ENCODE measurements at regions of chr22 and their contacts with region 1.

Region 1: DNA sequence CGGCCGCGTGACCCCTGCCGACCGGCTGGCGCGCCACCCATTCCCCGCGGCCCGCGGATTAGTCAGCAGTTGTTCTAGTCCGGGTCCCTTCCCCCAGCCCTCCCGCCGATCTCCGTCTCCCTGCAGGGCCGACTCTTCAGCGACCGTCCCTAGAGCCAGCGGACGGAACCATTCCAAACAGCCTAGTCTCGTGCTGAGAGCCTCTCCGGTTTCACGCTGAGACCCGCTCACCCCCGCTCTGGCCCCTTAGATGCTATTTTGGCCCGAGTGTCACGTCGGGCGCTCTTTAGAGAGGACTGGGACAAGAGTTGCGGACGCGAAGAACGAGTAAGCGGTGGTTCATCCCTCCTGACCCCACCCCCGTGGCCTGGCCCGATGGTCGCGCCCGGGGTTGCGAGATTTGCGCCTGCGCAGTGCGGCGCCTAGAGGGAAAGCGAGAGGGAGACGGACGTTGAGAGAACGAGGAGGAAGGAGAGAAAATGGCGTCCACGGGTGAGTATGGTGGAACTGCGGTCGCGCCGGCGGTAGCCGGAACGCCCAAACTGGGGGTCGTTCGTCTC is at the starts of genes EWSR1 and RHBDD3:
- DNase-seq: peak; percentile 99
- ATAC-seq: peak; percentile 86
- H3K4me3 Mint-ChIP-seq: peak within 1 kb of the TSS; percentile 96
- H3K27ac Mint-ChIP-seq: peak within 1 kb of the TSS; percentile 100
- H3K4me1 Mint-ChIP-seq: peaks cover 58% of the 10 kb centered on the region
- H3K27me3 Mint-ChIP-seq: no peaks in the 10 kb centered on the region
- CTCF ChIP-seq: no peak
- total RNA-seq, gene EWSR1: 347 and 382 TPM in 2 replicates
- total RNA-seq, gene RHBDD3: 17.7 and 17.9 TPM in 2 replicates

Region 2: DNA sequence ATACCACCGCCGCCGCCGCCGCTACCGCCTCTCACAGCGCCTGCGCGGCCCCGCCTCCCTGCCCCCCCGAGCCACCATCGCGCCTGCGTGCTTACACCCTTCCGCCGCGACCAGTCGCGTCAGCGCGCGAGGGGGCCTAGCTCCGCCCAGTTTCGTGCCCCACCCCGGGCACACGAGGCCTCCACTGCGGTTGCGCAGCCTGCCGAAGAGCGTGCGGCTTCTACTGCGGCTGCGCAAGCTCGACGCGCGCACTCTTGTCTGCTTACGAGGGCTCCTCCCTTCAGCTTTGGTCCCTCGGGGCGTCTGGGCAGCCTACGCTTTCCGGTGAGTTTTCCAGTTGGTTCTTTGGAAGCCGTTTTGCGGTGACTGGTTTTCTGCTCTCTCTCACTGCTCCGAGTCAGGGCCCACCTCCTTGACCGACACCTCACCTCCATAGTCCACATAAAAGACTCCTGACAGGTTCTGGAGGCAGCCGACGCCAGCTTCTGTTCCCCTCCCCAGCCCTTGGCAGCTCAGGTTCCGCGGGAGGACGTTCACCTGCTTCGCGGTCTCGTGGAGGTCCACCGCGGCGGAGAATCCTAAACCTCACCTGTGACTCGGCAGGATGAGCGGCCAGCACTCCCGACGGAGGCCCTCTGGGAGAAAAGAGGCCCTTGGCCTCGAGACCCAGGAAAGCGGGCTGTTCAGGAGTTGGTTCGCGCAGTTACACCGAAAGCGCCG is 1348.6 kb before region 1 on chr22 and contains the start of gene PITPNB:
- CTCF ChIA-PET with region 1: no interaction called
- POLR2A ChIA-PET with region 1: no interaction called
- intact Hi-C with region 1: loop called (anchors 10 kb)
- DNase-seq: peak; percentile 99
- ATAC-seq: peak; percentile 83
- H3K4me3 Mint-ChIP-seq: peak within 1 kb of the TSS; percentile 99
- H3K27ac Mint-ChIP-seq: peak within 1 kb of the TSS; percentile 99
- H3K4me1 Mint-ChIP-seq: peaks cover 56% of the 10 kb centered on the region
- H3K27me3 Mint-ChIP-seq: no peaks in the 10 kb centered on the region
- CTCF ChIP-seq: no peak
- total RNA-seq, gene PITPNB: 77.1 and 82.5 TPM in 2 replicates

Region 3: DNA sequence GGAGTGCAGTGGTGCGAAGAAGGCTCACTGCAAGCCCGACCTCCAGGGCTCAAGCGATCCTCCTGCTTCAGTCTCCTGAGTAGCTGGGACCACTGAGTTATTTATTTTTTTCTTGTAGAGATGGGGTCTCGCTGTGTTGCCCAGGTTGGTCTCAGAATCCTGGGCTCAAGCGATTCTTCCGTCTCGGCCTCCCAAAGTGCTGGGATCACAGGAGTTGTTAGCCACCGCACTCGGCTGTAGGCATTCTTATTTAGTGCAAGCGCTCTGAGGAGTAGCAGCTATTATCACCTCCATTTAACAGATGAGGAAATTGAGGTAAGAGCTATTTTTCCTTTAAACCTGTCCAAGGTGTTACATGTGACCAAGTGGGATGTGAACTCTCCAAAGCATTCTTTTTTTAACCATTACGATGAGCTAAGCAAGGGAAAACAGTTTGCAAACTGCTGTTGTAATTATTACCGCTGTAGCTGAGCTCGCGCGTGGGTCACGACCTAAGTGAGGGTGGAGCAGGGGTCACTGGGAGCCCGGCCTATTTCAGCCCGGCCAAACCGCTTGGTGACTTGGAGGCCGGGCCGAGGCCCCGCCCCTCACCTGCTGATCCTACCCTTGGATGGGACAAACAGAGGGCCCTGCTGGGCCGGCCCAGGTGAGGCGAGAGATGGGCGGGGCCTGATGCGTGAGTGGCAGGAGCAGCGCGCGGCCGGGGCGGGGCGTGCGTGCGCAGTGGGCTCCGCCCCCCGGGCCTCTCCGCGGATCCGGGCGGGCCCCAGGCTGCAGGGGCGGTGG is 195.6 kb before region 1 on chr22:
- CTCF ChIA-PET with region 1: no interaction called
- POLR2A ChIA-PET with region 1: no interaction called
- intact Hi-C with region 1: loop called (anchors 5 kb)
- DNase-seq: peak; percentile 76
- ATAC-seq: peak; percentile 99
- H3K4me3 Mint-ChIP-seq: peak overlapping the region; percentile 72
- H3K27ac Mint-ChIP-seq: no peak overlapping the region
- H3K4me1 Mint-ChIP-seq: peaks cover 25% of the 10 kb centered on the region
- H3K27me3 Mint-ChIP-seq: peaks cover 59% of the 10 kb centered on the region
- CTCF ChIP-seq: no peak

Region 4: DNA sequence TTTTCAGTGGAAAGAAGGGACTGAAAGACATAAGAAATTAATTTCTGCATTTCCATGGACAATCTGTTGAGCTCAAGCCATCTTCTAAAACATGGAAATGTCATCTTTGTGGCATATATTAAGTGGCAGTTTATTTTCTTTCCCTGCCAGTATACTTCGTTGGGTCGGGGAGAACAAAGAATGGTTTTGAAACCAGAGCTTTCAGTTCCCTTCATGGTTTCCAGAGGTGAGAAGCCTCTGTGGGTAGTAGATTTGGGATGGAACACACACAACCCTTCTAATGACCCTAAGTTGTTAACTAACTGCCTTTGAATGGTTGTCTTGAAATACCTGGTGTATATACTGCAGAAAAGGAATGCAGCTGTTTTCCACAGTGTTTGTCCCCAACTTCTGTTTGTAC is 20.9 kb after region 1 on chr22:
- CTCF ChIA-PET with region 1: no interaction called
- POLR2A ChIA-PET with region 1: no interaction called
- intact Hi-C with region 1: loop called (anchors 2 kb)
- DNase-seq: no peak
- ATAC-seq: no peak
- H3K4me3 Mint-ChIP-seq: no peak overlapping the region
- H3K27ac Mint-ChIP-seq: peak overlapping the region; percentile 30
- H3K4me1 Mint-ChIP-seq: no peaks in the 10 kb centered on the region
- H3K27me3 Mint-ChIP-seq: no peaks in the 10 kb centered on the region
- CTCF ChIP-seq: no peak